ENCODE measurements at regions of chr5 and their contacts with region 1.

Region 1: GRCh38 chr5:115309751-115310370 is 13.4 kb upstream of the CCDC112 start:
- DNase-seq: no peak
- H3K4me3 Mint-ChIP-seq: no peak overlapping the region
- H3K27ac Mint-ChIP-seq: no peak overlapping the region
- H3K4me1 Mint-ChIP-seq: no peaks in the 10 kb centered on the region
- H3K27me3 Mint-ChIP-seq: peaks cover 21% of the 10 kb centered on the region

Region 2: GRCh38 chr5:114467729-114468128 is 842.1 kb before region 1 on chr5:
- CTCF ChIA-PET with region 1: no interaction called
- DNase-seq: no peak
- H3K4me3 Mint-ChIP-seq: no peak overlapping the region
- H3K27ac Mint-ChIP-seq: no peak overlapping the region
- H3K4me1 Mint-ChIP-seq: no peaks in the 10 kb centered on the region
- H3K27me3 Mint-ChIP-seq: no peaks in the 10 kb centered on the region

Region 3: GRCh38 chr5:115575167-115576070 is 265.6 kb after region 1 on chr5:
- CTCF ChIA-PET with region 1: interaction called, 71 read pairs
- DNase-seq: no peak
- H3K4me3 Mint-ChIP-seq: no peak overlapping the region
- H3K27ac Mint-ChIP-seq: no peak overlapping the region
- H3K4me1 Mint-ChIP-seq: no peaks in the 10 kb centered on the region
- H3K27me3 Mint-ChIP-seq: peaks cover 8% of the 10 kb centered on the region

Region 4: GRCh38 chr5:115588640-115589039 is 278.8 kb after region 1 on chr5:
- CTCF ChIA-PET with region 1: interaction called, 18 read pairs
- DNase-seq: no peak
- H3K4me3 Mint-ChIP-seq: no peak overlapping the region
- H3K27ac Mint-ChIP-seq: no peak overlapping the region
- H3K4me1 Mint-ChIP-seq: no peaks in the 10 kb centered on the region
- H3K27me3 Mint-ChIP-seq: peaks cover 1% of the 10 kb centered on the region